ENCODE measurements at regions of chr12 and their contacts with region 1.

Region 1: GRCh38 chr12:68119724-68120211 is 39.8 kb downstream of the IFNG start:
- DNase-seq: no peak
- ATAC-seq: no peak

Region 2: GRCh38 chr12:68086019-68086603 is 33.7 kb before region 1 on chr12:
- intact Hi-C with region 1: loop called (anchors 2 kb)
- DNase-seq: no peak
- ATAC-seq: no peak